ENCODE measurements at regions of chr17 and their contacts with region 1.

Region 1: GRCh38 chr17:77247048-77247541 is 106.3 kb downstream of the SEC14L1 start:
- DNase-seq: peak; percentile 88
- H3K4me3 ChIP-seq: peak overlapping the region; percentile 51
- H3K27ac ChIP-seq: no peak overlapping the region
- H3K4me1 ChIP-seq: no peaks in the 10 kb centered on the region
- H3K27me3 ChIP-seq: no peaks in the 10 kb centered on the region
- CTCF ChIP-seq: peak; percentile 97

Region 2: DNA sequence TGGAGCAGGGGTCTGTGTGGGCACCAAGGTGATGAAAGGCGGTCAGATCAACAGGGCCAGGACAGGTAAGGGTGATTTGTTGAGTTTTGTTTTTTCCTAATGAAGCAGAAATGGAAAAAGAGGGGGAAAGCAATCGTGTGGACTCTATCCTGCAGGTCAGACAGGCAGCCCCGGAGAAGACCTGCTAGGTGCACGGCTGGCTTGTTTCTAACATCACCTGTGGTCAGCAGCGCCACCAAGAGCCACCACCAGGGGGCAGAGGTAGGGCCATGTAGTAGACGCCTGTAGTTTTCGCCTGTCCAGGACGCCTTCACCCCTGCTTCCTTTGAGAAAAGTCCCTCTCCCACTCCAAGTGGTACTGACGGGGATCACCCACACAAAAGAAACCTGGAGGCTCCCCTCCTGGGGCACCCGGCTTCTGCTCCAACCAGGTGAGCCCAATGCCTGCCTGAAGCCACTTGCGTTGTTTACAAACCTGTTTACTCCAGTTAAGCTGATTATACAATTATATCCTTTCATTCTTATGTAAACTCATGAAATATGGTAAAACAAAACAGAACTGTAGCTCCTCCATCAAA is 160.6 kb before region 1 on chr17:
- intact Hi-C with region 1: loop called (anchors 2 kb)
- DNase-seq: peak; percentile 94
- H3K4me3 ChIP-seq: no peak overlapping the region
- H3K27ac ChIP-seq: no peak overlapping the region
- H3K4me1 ChIP-seq: peaks cover 4% of the 10 kb centered on the region
- H3K27me3 ChIP-seq: no peaks in the 10 kb centered on the region
- CTCF ChIP-seq: peak; percentile 86

Measured in colonic mucosa (tissue), 4 donors.